GM12878 (cell line): ENCODE measurements at regions of chr21 and their contacts with region 1.

Region 1: GRCh38 chr21:42062236-42063022 is 8.7 kb upstream of the UMODL1 start:
- DNase-seq: peak; percentile 82
- ATAC-seq: peak; percentile 74
- H3K4me3 ChIP-seq: peak overlapping the region; percentile 72
- H3K27ac ChIP-seq: peak overlapping the region; percentile 93
- H3K4me1 ChIP-seq: peaks cover 54% of the 10 kb centered on the region
- H3K27me3 ChIP-seq: no peaks in the 10 kb centered on the region
- CTCF ChIP-seq: no peak
- EP300 ChIP-seq: peak in 1 of 2 experiments; percentile 62; a peak in 1 of 4 replicates
- POLR2A ChIP-seq: peak; percentile 87
- RAD21 ChIP-seq: no peak

Region 2: DNA sequence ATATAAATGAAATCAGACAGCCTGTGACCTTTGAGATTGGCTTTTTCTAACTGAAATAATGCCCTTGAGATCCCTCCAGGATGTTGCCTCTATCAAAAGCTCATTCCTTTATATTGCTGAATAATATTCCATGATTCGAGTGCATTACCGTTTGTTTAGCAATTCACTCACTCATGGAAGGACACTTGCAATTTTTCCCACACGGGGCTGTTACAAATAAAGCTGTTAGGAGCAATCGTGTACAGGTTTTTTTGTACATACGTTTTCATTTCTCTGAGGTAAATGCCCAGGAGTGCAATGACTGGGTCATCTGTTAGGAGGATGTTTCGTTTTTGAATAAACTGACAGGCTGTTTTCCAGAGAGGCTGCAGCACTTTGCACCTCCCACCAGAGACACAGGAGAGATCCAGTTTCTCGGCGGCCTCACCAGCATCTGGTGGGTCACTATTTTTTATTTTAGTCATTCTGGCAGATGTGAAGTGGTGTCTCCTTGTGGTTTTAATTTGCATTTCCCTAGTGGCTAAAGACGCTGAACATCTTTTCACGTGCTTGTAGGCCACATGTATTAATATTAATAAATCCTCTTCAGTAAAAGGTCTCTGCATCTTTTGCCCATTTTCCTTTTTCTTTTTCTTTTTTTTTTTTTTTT is 194.2 kb before region 1 on chr21:
- CTCF ChIA-PET with region 1: no interaction called
- POLR2A ChIA-PET with region 1: no interaction called
- RAD21 ChIA-PET with region 1: interaction called, 3 read pairs
- SMC1A ChIA-PET with region 1: interaction called, 5 read pairs
- in situ Hi-C with region 1: no loop called
- intact Hi-C with region 1: loop called (anchors 2 kb)
- DNase-seq: peak; percentile 79
- ATAC-seq: peak; percentile 60
- H3K4me3 ChIP-seq: peak overlapping the region; percentile 57; the same call in 1 of the 2 replicates
- H3K27ac ChIP-seq: peak overlapping the region; percentile 64
- H3K4me1 ChIP-seq: peaks cover 54% of the 10 kb centered on the region
- H3K27me3 ChIP-seq: no peaks in the 10 kb centered on the region
- CTCF ChIP-seq: no peak
- EP300 ChIP-seq: peak; percentile 68 to 85; a peak in 3 of 4 replicates
- POLR2A ChIP-seq: 0 out of 2 replicates have a peak, but pooled peaks have one; percentile 23
- RAD21 ChIP-seq: no peak

Region 3: GRCh38 chr21:41953831-41954653 is 108.4 kb before region 1 on chr21 and contains the start of gene C2CD2:
- CTCF ChIA-PET with region 1: no interaction called
- POLR2A ChIA-PET with region 1: no interaction called
- RAD21 ChIA-PET with region 1: no interaction called
- SMC1A ChIA-PET with region 1: no interaction called
- in situ Hi-C with region 1: no loop called
- intact Hi-C with region 1: loop called (anchors 5 kb)
- DNase-seq: no peak
- ATAC-seq: peak; percentile 65
- H3K4me3 ChIP-seq: peak within 1 kb of the TSS; percentile 78
- H3K27ac ChIP-seq: peak within 1 kb of the TSS; percentile 48
- H3K4me1 ChIP-seq: peaks cover 37% of the 10 kb centered on the region
- H3K27me3 ChIP-seq: no peaks in the 10 kb centered on the region
- CTCF ChIP-seq: no peak
- EP300 ChIP-seq: no peak; a peak in 1 of 4 replicates
- POLR2A ChIP-seq: peak; percentile 56
- RAD21 ChIP-seq: no peak
- polyA plus RNA-seq, gene C2CD2: 2.2 to 2.9 TPM

Region 4: GRCh38 chr21:42009831-42010523 is 52.5 kb before region 1 on chr21 and contains the start of gene ZBTB21:
- CTCF ChIA-PET with region 1: interaction called, 7 read pairs
- POLR2A ChIA-PET with region 1: interaction called, 3 read pairs
- RAD21 ChIA-PET with region 1: interaction called, 4 read pairs
- SMC1A ChIA-PET with region 1: no interaction called
- in situ Hi-C with region 1: no loop called
- intact Hi-C with region 1: loop called (anchors 5 kb)
- DNase-seq: peak; percentile 96
- ATAC-seq: peak; percentile 89
- H3K4me3 ChIP-seq: peak within 1 kb of the TSS; percentile 81
- H3K27ac ChIP-seq: peak within 1 kb of the TSS; percentile 96
- H3K4me1 ChIP-seq: peaks cover 5% of the 10 kb centered on the region
- H3K27me3 ChIP-seq: no peaks in the 10 kb centered on the region
- CTCF ChIP-seq: no peak
- EP300 ChIP-seq: peak in 1 of 2 experiments; percentile 27; a peak in 1 of 4 replicates
- POLR2A ChIP-seq: peak; percentile 79
- RAD21 ChIP-seq: no peak
- polyA plus RNA-seq, gene ZBTB21: 1.8 to 2.3 TPM

Region 5: GRCh38 chr21:42080788-42081083 is 18.3 kb after region 1 on chr21:
- CTCF ChIA-PET with region 1: interaction called, 3 read pairs
- POLR2A ChIA-PET with region 1: interaction called, 5 read pairs
- RAD21 ChIA-PET with region 1: interaction called, 5 read pairs
- SMC1A ChIA-PET with region 1: interaction called, 4 read pairs
- in situ Hi-C with region 1: no loop called
- intact Hi-C with region 1: loop called (anchors 1 kb)
- DNase-seq: no peak
- ATAC-seq: no peak
- H3K4me3 ChIP-seq: no peak overlapping the region
- H3K27ac ChIP-seq: no peak overlapping the region
- H3K4me1 ChIP-seq: peaks cover 27% of the 10 kb centered on the region
- H3K27me3 ChIP-seq: no peaks in the 10 kb centered on the region
- CTCF ChIP-seq: no peak
- EP300 ChIP-seq: no peak
- POLR2A ChIP-seq: no peak
- RAD21 ChIP-seq: no peak